ENCODE measurements at regions of chr14 and their contacts with region 1.

Region 1: GRCh38 chr14:22319526-22320361 is 269.3 kb downstream of the DAD1 start:
- DNase-seq: peak; percentile 59
- H3K4me3 ChIP-seq: no peak overlapping the region
- H3K27ac ChIP-seq: no peak overlapping the region
- H3K4me1 ChIP-seq: no peaks in the 10 kb centered on the region
- H3K27me3 ChIP-seq: peaks cover 14 to 45% of the 10 kb centered on the region in 2 experiments
- CTCF ChIP-seq: peak; percentile 49 to 57
- POLR2A ChIP-seq: no peak

Region 2: GRCh38 chr14:21894003-21894897 is 425.5 kb before region 1 on chr14:
- CTCF ChIA-PET with region 1: no interaction called
- POLR2A ChIA-PET with region 1: no interaction called
- dilution Hi-C with region 1: no loop called
- intact Hi-C with region 1: no loop called
- DNase-seq: no peak
- H3K4me3 ChIP-seq: no peak overlapping the region
- H3K27ac ChIP-seq: no peak overlapping the region
- H3K4me1 ChIP-seq: peaks cover 14% of the 10 kb centered on the region
- H3K27me3 ChIP-seq: no peaks in the 10 kb centered on the region
- CTCF ChIP-seq: peak; percentile 57 to 62
- POLR2A ChIP-seq: no peak

Region 3: GRCh38 chr14:22163051-22163450 is 156.7 kb before region 1 on chr14:
- CTCF ChIA-PET with region 1: interaction called, 5 read pairs
- POLR2A ChIA-PET with region 1: no interaction called
- dilution Hi-C with region 1: no loop called
- intact Hi-C with region 1: loop called (anchors 1 kb)
- DNase-seq: peak; percentile 23
- H3K4me3 ChIP-seq: no peak overlapping the region
- H3K27ac ChIP-seq: no peak overlapping the region
- H3K4me1 ChIP-seq: peaks cover 3% of the 10 kb centered on the region
- H3K27me3 ChIP-seq: peaks cover 10 to 11% of the 10 kb centered on the region in 2 experiments
- CTCF ChIP-seq: peak; percentile 7 to 18
- POLR2A ChIP-seq: no peak

Region 4: GRCh38 chr14:22333422-22334276 is 13.9 kb after region 1 on chr14:
- CTCF ChIA-PET with region 1: interaction called, 23 read pairs
- POLR2A ChIA-PET with region 1: no interaction called
- dilution Hi-C with region 1: no loop called
- intact Hi-C with region 1: no loop called
- DNase-seq: peak; percentile 52
- H3K4me3 ChIP-seq: no peak overlapping the region
- H3K27ac ChIP-seq: no peak overlapping the region
- H3K4me1 ChIP-seq: peaks cover 6% of the 10 kb centered on the region
- H3K27me3 ChIP-seq: peaks cover 0 to 2% of the 10 kb centered on the region in 2 experiments
- CTCF ChIP-seq: no peak
- POLR2A ChIP-seq: no peak

Region 5: GRCh38 chr14:22338917-22339715 is 19.4 kb after region 1 on chr14:
- CTCF ChIA-PET with region 1: interaction called, 23 read pairs
- POLR2A ChIA-PET with region 1: no interaction called
- dilution Hi-C with region 1: no loop called
- intact Hi-C with region 1: no loop called
- DNase-seq: no peak
- H3K4me3 ChIP-seq: no peak overlapping the region
- H3K27ac ChIP-seq: no peak overlapping the region
- H3K4me1 ChIP-seq: peaks cover 2% of the 10 kb centered on the region
- H3K27me3 ChIP-seq: peaks cover 0 to 8% of the 10 kb centered on the region in 2 experiments
- CTCF ChIP-seq: no peak
- POLR2A ChIP-seq: no peak

Region 6: GRCh38 chr14:22380571-22381407 is 61.0 kb after region 1 on chr14:
- CTCF ChIA-PET with region 1: interaction called, 225 read pairs
- POLR2A ChIA-PET with region 1: no interaction called
- dilution Hi-C with region 1: no loop called
- intact Hi-C with region 1: loop called (anchors 1 kb)
- DNase-seq: no peak
- H3K4me3 ChIP-seq: no peak overlapping the region
- H3K27ac ChIP-seq: no peak overlapping the region
- H3K4me1 ChIP-seq: no peaks in the 10 kb centered on the region
- H3K27me3 ChIP-seq: peaks cover 24 to 38% of the 10 kb centered on the region in 2 experiments
- CTCF ChIP-seq: no peak
- POLR2A ChIP-seq: no peak

Region 7: DNA sequence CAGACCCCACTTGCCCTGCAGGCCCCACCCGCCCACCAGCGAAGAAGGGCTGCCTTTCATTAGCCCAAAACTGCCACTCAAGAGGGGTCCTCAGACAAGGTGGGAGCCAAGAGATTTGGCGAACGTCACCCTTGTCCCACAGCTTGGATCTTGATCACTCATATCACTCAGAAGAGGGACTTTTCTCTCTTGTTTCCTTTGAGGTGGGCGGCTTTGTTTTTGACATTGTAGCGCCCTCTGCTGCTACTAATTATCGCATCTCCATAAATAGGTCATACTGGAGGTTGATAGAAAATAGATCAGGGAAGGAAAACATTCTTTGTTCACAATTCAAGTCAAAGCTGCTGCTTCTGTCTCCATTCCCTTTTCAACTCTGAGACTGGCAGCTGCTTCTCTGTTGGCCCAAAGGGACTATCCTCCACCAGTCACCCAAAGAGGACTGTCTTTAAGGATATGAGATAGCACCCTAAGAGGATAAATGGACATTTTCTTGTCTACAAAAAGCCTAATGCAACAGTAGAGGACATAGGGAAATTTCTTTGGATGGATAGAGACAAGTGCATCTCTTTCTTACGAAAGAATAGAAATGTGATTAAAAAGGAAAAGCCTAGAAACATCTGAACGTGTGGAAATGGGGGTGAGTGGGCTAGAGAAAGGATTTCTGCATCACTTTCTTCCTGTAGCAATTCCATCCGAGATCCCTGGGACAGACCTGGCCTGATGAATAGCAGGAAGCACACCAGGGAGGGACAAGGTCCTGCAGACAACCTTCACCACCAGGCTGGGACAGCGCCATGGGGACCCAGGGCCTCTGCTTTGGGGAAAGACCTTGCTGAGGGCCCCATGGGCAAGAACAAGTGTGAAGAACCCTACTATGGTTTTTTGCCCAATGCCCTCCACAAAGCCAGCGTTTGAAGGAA is 153.5 kb after region 1 on chr14:
- CTCF ChIA-PET with region 1: interaction called, 6 read pairs
- POLR2A ChIA-PET with region 1: no interaction called
- dilution Hi-C with region 1: no loop called
- intact Hi-C with region 1: loop called (anchors 2 kb)
- DNase-seq: peak; percentile 72
- H3K4me3 ChIP-seq: no peak overlapping the region
- H3K27ac ChIP-seq: no peak overlapping the region
- H3K4me1 ChIP-seq: peaks cover 20% of the 10 kb centered on the region
- H3K27me3 ChIP-seq: peaks cover 0 to 5% of the 10 kb centered on the region in 2 experiments
- CTCF ChIP-seq: peak; percentile 49 to 52
- POLR2A ChIP-seq: no peak